ENCODE measurements at regions of chr7 and their contacts with region 1.

Region 1: GRCh38 chr7:139095194-139095659 is 14.3 kb downstream of the ZC3HAV1 start:
- DNase-seq: peak; percentile 94
- ATAC-seq: peak; percentile 84
- H3K4me3 Mint-ChIP-seq: peak overlapping the region; percentile 81
- H3K27ac Mint-ChIP-seq: peak overlapping the region; percentile 96
- H3K4me1 Mint-ChIP-seq: peaks cover 86% of the 10 kb centered on the region
- H3K27me3 Mint-ChIP-seq: no peaks in the 10 kb centered on the region

Region 2: DNA sequence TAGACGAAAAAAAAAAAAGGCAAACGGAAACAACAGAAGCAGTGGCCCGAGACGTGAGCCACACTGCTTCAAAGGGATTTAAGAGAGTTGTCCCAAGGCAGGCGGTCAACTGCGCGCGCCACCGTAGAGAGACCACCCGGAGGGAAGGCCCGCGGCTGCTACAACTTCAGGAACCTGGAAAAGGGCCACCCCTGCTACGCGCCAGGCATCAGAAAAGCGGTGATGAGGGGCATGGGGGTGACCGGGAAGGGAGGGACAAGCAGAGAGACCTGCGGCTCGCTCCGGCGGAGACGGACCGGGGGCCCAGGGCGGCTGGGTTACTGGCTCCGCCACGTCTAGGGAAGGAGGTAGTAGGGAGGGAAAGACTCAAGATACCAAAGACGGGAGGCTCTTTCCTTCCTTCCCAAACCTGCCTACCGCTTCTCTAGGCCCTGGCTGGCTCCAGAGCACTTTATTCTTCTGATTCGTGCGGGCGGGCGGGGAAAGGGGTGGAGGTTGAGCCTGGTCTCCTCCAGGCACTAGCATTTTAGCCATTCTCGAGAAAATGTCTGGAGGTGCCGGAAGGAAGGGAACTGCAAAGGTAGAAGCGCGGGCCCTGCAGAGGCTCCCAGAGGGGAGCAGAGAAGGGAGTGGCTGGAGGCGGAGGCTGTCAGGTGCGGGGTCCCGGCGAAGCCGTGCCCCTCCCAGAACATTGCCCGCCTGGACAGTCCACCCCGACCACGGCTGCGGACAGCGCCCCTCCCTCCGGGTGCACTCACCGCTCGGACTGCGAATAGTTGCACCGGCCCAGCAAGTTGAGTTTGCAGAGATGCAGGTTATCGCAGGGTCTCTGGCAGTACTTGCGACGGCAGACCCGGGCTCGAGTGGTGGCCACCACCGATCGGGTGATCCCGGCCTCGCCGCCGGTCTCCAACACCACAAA is 13.3 kb after region 1 on chr7:
- CTCF ChIA-PET with region 1: interaction called, 35 read pairs
- DNase-seq: peak; percentile 57
- ATAC-seq: peak; percentile 3
- H3K4me3 Mint-ChIP-seq: peak overlapping the region; percentile 100
- H3K27ac Mint-ChIP-seq: peak overlapping the region; percentile 92
- H3K4me1 Mint-ChIP-seq: peaks cover 31% of the 10 kb centered on the region
- H3K27me3 Mint-ChIP-seq: no peaks in the 10 kb centered on the region

Region 3: GRCh38 chr7:139118234-139118804 is 23.1 kb after region 1 on chr7:
- CTCF ChIA-PET with region 1: interaction called, 15 read pairs
- DNase-seq: peak; percentile 75
- ATAC-seq: peak; percentile 84
- H3K4me3 Mint-ChIP-seq: peak overlapping the region; percentile 66
- H3K27ac Mint-ChIP-seq: peak overlapping the region; percentile 84
- H3K4me1 Mint-ChIP-seq: peaks cover 28% of the 10 kb centered on the region
- H3K27me3 Mint-ChIP-seq: no peaks in the 10 kb centered on the region

Region 4: DNA sequence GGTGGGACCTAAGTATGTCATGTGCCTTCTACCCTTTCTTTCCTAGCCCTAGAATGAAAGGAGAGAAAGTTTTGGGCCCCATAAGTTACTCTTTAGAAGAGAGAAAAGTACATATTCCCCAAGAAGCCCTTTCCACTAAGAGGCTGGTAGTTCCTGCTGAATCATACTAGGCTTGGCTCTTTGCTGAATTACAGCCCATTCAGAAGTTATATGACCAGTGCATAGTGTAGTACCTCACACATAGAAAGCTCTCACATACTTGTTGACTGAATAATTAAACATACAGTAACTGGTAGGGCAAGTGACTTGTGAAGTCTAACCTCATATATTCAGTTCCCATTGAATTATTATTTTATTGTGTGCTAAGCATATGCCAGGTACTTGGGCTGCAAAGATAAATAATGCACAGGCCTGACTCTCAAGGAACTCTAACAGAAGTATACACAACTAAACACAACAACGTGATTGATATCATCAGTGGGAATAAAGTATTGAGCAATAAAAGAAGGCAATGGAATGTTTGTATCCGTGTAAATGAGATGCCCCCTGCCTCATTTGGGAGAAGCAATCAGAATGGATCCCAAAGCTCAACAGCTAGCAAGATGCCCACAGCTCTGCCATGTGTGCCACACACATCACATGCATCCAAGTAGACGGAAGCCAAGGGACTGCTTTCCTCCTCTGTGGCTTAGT is 96.9 kb after region 1 on chr7:
- CTCF ChIA-PET with region 1: no interaction called
- DNase-seq: no peak
- ATAC-seq: no peak
- H3K4me3 Mint-ChIP-seq: no peak overlapping the region
- H3K27ac Mint-ChIP-seq: no peak overlapping the region
- H3K4me1 Mint-ChIP-seq: no peaks in the 10 kb centered on the region
- H3K27me3 Mint-ChIP-seq: no peaks in the 10 kb centered on the region